HepG2 (cell line): ENCODE measurements at regions of chr11 and their contacts with region 1.

Region 1: DNA sequence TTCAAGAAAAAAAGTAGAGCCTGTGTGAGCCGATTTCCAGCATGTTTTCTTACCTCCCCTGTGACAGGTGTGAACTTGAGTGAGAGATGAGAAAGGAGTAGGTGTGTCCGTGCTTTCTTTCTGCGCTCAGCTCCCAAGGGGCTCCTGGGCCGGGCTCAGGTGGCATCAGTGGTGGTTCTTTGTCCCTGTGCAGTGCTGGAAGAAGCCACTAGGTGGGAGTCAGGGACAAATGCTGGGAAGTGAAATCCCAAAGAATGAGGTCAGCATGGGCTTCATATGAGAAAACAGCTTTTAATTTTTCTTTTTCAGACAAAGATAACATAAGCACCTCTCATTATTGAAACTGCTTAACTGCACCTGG is 57.8 kb downstream of the PPFIBP2 start:
- DNase-seq: peak; percentile 76
- ATAC-seq: peak; percentile 42
- H3K4me3 ChIP-seq: peak overlapping the region in 2 of 3 experiments; percentile 5 to 56; a peak in 2 of 6 replicates
- H3K27ac ChIP-seq: peak overlapping the region; percentile 89
- H3K4me1 ChIP-seq: peaks cover 59% of the 10 kb centered on the region
- H3K27me3 ChIP-seq: no peaks in the 10 kb centered on the region
- CTCF ChIP-seq: peak; percentile 91
- EP300 ChIP-seq: no peak
- POLR2A ChIP-seq: no peak
- RAD21 ChIP-seq: peak; percentile 86

Region 2: DNA sequence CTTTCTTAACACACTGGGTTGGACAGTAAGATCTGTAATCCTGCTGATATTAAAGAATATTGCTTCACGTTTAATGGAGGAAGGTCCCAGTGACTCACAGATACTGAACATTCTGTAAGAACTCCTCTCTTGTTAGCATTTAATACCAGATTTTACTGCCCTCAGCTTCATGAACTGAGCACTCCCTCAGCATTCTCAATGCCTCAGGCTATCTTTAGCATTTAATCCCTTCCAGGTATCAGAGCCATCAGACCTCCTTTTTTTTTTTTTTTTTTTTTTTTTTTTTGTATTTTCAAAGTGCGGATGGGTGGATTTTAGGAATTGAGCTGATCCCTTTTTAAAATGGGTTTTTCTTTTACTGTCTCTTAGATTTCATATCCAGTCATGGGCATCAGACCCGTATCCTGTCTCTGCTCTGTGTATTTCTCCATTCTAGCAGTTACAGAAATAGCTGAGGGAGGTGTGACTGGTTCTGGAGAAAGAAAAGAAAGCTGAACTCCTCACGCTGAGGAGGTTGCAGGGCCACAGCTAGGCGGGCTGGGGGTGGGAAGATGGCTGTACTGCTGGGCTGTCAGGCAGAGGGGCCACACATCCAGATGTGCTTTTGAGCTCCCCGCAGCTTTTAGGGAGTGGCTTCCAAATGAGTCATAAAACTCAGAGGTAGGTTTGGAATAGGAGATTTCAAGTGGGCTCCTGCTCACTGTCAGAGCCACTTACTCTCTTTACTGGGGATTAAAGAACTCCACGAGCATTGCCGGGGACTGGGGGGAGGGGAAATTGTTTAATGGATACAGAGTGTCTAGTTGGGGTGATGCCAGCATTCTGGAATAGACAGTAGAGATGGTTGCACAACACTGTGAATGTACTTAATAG is 223.0 kb before region 1 on chr11:
- CTCF ChIA-PET with region 1: no interaction called
- POLR2A ChIA-PET with region 1: no interaction called
- in situ Hi-C with region 1: no loop called
- intact Hi-C with region 1: no loop called
- DNase-seq: no peak
- ATAC-seq: no peak
- H3K4me3 ChIP-seq: no peak overlapping the region
- H3K27ac ChIP-seq: no peak overlapping the region
- H3K4me1 ChIP-seq: no peaks in the 10 kb centered on the region
- H3K27me3 ChIP-seq: peaks cover 0 to 3% of the 10 kb centered on the region in 2 experiments; a peak in 3 of 5 replicates
- CTCF ChIP-seq: no peak
- EP300 ChIP-seq: no peak
- POLR2A ChIP-seq: no peak
- RAD21 ChIP-seq: no peak

Region 3: GRCh38 chr11:7513234-7514098 is 58.2 kb before region 1 on chr11 and contains the start of gene PPFIBP2:
- CTCF ChIA-PET with region 1: no interaction called
- POLR2A ChIA-PET with region 1: interaction called, 3 read pairs
- in situ Hi-C with region 1: no loop called
- intact Hi-C with region 1: loop called (anchors 1 kb)
- DNase-seq: peak; percentile 58
- ATAC-seq: peak; percentile 88
- H3K4me3 ChIP-seq: peak within 1 kb of the TSS; percentile 65 to 93 (median 72)
- H3K27ac ChIP-seq: peak within 1 kb of the TSS; percentile 62
- H3K4me1 ChIP-seq: peaks cover 48% of the 10 kb centered on the region
- H3K27me3 ChIP-seq: no peaks in the 10 kb centered on the region; a peak in 2 of 5 replicates
- CTCF ChIP-seq: peak; percentile 85
- EP300 ChIP-seq: no peak
- POLR2A ChIP-seq: peak; percentile 37 to 62; a peak in 2 of 4 replicates
- RAD21 ChIP-seq: peak; percentile 63
- total RNA-seq, gene PPFIBP2: 15.0 and 15.8 TPM in 2 replicates

Region 4: DNA sequence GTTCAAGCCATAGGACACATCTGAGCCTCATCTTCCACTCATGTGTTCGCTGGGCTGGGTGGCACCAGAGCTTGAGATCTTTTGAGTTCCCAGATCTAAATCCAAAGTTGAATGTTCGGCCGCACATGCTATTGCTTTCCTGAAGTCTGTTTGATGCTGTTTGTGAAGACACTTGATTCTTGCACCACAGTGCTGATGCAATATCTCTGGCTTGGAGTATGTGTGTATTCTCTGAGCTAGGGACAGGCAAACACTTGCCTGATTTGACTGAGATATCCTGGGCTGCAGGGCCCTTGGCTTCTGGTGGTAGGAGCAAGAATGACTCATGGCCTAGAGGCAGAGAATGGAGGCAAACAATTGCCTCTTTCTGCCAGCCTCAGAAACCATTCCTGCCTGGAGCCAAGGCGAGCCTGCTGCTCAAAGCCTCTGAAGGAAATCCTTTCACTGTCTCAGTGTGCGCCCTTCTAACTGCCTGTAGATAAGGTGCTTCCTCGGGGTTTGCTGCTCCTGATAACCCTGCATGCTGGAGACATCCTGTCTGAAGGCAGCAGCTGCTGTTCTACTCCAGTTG is 28.7 kb after region 1 on chr11:
- CTCF ChIA-PET with region 1: no interaction called
- POLR2A ChIA-PET with region 1: interaction called, 115 read pairs
- in situ Hi-C with region 1: no loop called
- intact Hi-C with region 1: loop called (anchors 1 kb)
- DNase-seq: peak; percentile 89
- ATAC-seq: peak; percentile 97
- H3K4me3 ChIP-seq: no peak overlapping the region
- H3K27ac ChIP-seq: peak overlapping the region; percentile 58
- H3K4me1 ChIP-seq: peaks cover 65% of the 10 kb centered on the region
- H3K27me3 ChIP-seq: no peaks in the 10 kb centered on the region
- CTCF ChIP-seq: no peak
- EP300 ChIP-seq: peak; percentile 37 to 80; a peak in 3 of 4 replicates
- POLR2A ChIP-seq: no peak
- RAD21 ChIP-seq: no peak

Region 5: DNA sequence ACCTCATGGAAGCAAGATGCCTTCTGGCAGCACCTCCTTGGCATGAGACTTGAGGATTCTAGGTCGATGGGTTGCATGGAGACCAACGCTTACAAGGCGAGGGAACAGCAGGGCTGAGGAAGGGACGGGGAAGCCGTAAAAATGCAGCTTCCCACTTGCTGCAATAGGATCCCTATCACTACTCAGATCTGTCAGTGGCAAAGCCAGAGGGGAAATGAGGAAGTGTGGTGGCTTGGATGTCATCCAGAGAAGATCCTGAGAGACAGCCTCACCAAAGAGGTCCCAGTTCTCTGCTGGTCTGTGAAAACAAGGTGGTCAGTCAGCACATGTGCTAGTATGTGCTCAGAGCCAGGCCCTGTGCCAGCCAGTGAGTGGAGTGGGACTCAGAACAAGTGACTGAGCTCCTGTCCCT is 79.5 kb after region 1 on chr11:
- CTCF ChIA-PET with region 1: interaction called, 31 read pairs
- POLR2A ChIA-PET with region 1: interaction called, 5 read pairs
- in situ Hi-C with region 1: loop called (anchors 5 kb)
- intact Hi-C with region 1: loop called (anchors 2 kb)
- DNase-seq: no peak
- ATAC-seq: no peak
- H3K4me3 ChIP-seq: no peak overlapping the region
- H3K27ac ChIP-seq: no peak overlapping the region
- H3K4me1 ChIP-seq: peaks cover 18% of the 10 kb centered on the region
- H3K27me3 ChIP-seq: no peaks in the 10 kb centered on the region
- CTCF ChIP-seq: no peak
- EP300 ChIP-seq: no peak
- POLR2A ChIP-seq: no peak
- RAD21 ChIP-seq: no peak

Region 6: DNA sequence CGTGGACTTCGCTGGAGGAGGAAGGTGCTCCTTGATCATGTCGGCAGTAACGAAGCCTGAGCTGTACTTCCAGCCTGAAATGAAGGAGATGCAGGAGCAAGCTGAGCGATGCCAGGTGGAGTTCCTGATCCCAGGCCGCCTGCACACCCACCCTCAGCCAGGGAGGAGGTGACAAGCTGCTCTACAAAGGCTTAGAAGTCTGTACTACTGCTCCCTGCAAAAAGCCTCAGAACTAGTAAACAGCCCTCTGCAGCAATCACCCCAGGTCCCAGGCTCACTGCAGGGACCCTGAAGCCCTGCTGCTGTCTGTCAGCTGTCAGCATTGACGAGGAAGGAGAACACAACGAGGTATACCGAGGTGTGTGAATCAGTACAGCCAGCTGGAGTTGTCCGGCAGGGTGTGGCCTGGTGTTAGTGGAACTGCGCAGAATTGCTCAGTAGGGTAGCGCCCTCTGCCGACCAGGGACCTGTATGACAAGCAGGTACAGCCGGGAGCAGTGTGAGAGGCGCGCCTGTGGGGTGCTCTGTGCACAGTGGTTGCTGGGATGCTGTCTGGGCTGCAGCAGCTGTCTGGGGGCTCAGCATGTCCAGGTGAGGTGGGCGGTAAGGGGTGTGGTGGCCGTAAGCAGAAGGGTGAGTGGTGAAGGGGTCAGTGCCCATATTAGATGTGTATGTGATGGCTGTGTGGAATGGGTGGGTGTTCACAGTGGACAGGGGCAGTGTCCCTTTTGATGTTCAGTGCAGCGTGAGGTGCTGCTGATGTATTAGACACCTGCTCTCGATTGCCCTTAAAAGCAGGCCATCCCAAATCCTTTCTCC is 94.1 kb after region 1 on chr11:
- CTCF ChIA-PET with region 1: interaction called, 27 read pairs
- POLR2A ChIA-PET with region 1: interaction called, 10 read pairs
- in situ Hi-C with region 1: no loop called
- intact Hi-C with region 1: loop called (anchors 1 kb)
- DNase-seq: peak; percentile 65
- ATAC-seq: peak; percentile 98
- H3K4me3 ChIP-seq: no peak overlapping the region
- H3K27ac ChIP-seq: no peak overlapping the region
- H3K4me1 ChIP-seq: 0 out of 2 replicates have a peak, but pooled peaks cover 8% of the 10 kb centered on the region
- H3K27me3 ChIP-seq: no peaks in the 10 kb centered on the region
- CTCF ChIP-seq: peak; percentile 98
- EP300 ChIP-seq: no peak
- POLR2A ChIP-seq: no peak
- RAD21 ChIP-seq: peak; percentile 93

Region 7: DNA sequence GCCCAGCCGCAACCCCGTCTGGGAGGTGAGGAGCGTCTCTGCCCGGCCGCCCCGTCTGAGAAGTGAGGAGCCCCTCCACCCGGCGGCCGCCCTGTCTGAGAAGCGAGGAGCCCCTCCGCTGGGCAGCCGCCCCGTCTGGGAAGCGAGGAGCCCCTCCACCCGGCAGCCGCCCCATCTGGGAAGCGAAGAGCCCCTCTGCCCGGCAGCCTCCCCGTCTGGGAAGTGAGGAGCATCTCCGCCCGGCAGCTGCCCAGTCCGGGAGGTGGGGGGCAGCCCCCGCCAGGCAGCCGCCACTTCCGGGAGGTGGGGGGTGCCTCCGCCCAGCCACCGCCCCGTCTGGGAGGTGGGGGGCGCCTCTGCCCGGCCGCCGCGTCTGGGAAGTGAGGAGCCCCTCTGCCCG is 951.8 kb after region 1 on chr11:
- CTCF ChIA-PET with region 1: no interaction called
- POLR2A ChIA-PET with region 1: no interaction called
- in situ Hi-C with region 1: no loop called
- intact Hi-C with region 1: no loop called
- DNase-seq: no peak
- ATAC-seq: no peak
- H3K4me3 ChIP-seq: no peak overlapping the region
- H3K27ac ChIP-seq: no peak overlapping the region
- H3K4me1 ChIP-seq: no peaks in the 10 kb centered on the region
- H3K27me3 ChIP-seq: no peaks in the 10 kb centered on the region
- CTCF ChIP-seq: no peak
- EP300 ChIP-seq: no peak
- POLR2A ChIP-seq: no peak
- RAD21 ChIP-seq: no peak